Activated CD8-positive, alpha-beta T cell treated with anti-CD3 and anti-CD28 coated beads for 36 hours (primary cell): ENCODE measurements at regions of chr18 and their contacts with region 1.

Region 1: DNA sequence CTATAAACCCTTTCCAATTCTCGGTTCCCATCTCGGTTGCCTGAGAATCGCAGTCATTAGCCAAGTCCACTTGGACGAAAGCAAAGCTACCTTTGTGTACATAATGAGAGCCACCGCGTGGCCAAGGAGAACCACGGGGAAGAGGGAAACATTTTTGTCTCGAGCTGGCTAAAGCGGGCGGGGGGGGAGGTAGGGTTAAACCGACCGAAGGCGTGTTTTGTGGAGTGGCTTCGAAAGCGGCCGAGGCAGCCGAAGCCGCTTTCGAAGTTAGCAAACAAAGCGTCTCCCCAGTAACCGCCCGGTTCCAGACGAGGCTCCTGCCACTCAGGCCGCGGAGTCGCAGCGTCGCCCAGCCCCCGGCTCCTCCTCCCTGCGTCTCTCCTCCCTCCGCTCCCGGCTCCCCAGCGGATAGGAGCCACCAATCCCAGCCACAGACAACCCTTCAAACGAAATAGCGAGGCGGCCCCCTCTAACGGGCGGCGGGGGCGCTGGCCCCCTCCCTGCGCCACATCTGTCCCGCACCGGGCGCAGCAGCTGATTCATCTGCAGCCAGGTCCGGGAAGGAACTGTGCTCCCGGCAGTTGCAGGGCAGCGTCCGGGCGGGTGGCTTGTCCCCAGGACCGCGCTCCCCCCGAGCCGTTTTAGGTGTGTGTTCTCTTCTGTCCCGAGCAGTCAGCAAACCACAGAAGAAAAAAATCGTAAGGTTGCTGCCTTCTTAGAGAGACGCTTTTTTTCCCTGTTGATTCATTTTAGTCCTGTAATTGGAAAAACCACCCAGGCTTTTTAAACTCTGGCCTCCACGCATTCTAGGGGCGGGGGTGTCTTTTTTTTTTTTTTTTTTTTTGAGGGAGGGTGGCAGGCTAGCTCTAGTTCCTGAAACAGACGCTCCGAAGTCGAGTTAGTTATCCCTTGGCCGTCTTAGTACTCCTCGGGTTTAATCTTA is 1.8 kb upstream of the TGIF1 start:
- DNase-seq: peak; percentile 92
- ATAC-seq: peak; percentile 69
- H3K4me3 Mint-ChIP-seq: peak overlapping the region; percentile 94
- H3K27ac Mint-ChIP-seq: peak overlapping the region; percentile 92
- H3K4me1 Mint-ChIP-seq: peaks cover 19% of the 10 kb centered on the region
- H3K27me3 Mint-ChIP-seq: no peaks in the 10 kb centered on the region
- CTCF ChIP-seq: no peak

Region 2: DNA sequence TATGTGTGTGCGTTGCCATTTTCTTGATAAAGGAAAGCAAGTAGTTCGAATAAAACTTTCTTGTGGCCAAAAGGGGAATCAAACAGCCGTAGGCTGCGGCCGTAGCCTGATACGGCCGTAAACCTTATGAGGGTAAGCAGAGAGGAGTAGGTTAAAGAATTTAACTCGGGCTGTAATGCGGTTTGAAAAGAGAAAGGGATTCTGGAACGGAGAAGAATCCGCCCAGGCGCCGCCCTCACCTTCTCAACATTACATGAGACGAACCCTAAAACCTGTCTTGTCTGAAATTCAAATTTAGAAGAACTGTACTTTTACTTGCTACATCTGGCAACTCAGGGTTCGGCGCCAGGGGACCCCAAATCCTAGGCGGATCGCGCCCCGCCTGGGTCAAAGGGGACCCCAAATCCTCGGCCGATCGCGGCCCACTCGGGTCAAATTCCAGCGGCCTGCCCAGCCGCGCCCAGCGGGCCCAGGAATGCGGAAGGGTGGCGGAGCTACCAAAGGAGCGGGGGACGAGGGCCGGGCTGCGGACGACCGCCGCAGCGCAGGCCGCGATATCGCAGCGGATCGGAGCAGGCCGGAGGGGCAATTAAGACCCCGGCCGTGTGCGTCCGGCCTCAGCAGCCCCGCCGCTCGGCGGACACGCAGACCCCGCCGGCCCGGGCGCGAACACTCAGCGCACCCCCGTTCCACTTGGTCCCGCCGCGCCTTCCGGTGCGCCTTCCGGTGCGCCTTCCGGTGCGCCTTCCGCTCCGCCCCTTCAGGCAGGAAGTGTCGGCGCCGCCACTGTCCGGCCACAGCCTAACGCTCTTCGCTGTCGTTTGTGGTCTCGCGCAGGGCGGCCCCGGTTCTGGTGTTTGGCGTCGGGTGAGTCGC is 186.6 kb before region 1 on chr18 and contains the start of gene MYL12B:
- CTCF ChIA-PET with region 1: no interaction called
- POLR2A ChIA-PET with region 1: interaction called, 4 read pairs
- intact Hi-C with region 1: loop called (anchors 5 kb)
- DNase-seq: peak; percentile 85
- ATAC-seq: peak; percentile 81
- H3K4me3 Mint-ChIP-seq: peak within 1 kb of the TSS; percentile 91
- H3K27ac Mint-ChIP-seq: peak within 1 kb of the TSS; percentile 99
- H3K4me1 Mint-ChIP-seq: peaks cover 59% of the 10 kb centered on the region
- H3K27me3 Mint-ChIP-seq: no peaks in the 10 kb centered on the region
- CTCF ChIP-seq: no peak
- total RNA-seq, gene MYL12B: 243 to 264 TPM

Region 3: GRCh38 chr18:3297025-3297984 is 150.9 kb before region 1 on chr18:
- CTCF ChIA-PET with region 1: interaction called, 42 read pairs
- POLR2A ChIA-PET with region 1: interaction called, 5 read pairs
- intact Hi-C with region 1: no loop called
- DNase-seq: peak; percentile 99
- ATAC-seq: peak; percentile 99
- H3K4me3 Mint-ChIP-seq: peak overlapping the region; percentile 92
- H3K27ac Mint-ChIP-seq: peak overlapping the region; percentile 86
- H3K4me1 Mint-ChIP-seq: peaks cover 5% of the 10 kb centered on the region
- H3K27me3 Mint-ChIP-seq: peaks cover 24% of the 10 kb centered on the region
- CTCF ChIP-seq: peak; percentile 83

Region 4: DNA sequence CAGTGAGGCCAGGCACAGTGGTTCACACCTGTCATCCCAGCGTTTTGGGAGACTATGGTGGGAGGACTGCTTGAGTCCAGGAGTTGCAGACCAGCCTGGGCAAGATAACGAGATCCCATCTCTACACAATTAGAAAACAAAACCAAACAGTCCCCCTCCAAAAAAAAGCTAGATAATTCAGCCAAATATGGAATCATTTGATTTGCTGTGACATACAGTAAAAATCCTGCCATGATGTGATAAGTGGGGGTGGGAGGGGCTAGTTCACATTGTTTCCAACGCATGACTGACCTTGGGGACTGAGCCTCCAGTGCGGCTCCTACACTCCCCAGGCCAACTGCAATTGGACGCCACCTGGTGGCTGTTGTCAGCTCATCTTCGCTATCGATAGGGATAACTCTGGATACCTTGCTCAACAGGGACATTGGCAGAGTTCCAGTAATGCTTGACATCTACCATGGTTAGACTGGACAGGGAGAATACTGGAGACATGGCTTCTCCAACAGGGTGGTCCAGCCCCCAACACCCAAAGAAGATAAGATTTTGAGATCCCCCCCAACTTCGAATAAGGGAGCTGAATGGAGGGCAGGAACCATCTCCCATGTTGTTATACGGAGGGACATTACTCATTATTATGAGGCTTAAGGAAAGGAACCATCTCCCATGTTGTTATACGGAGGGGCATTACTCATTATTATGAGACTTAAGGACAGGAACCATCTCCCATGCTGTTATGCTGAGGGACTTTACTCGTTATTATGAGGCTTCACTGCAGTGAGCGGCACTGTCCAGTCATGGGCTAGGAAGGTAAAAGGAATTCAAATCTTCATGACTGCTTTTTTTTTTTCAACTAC is 137.7 kb after region 1 on chr18:
- CTCF ChIA-PET with region 1: interaction called, 13 read pairs
- POLR2A ChIA-PET with region 1: interaction called, 6 read pairs
- intact Hi-C with region 1: no loop called
- DNase-seq: peak; percentile 85
- ATAC-seq: peak; percentile 85
- H3K4me3 Mint-ChIP-seq: no peak overlapping the region
- H3K27ac Mint-ChIP-seq: no peak overlapping the region
- H3K4me1 Mint-ChIP-seq: peaks cover 25% of the 10 kb centered on the region
- H3K27me3 Mint-ChIP-seq: no peaks in the 10 kb centered on the region
- CTCF ChIP-seq: peak; percentile 82

Region 5: GRCh38 chr18:3604498-3605408 is 156.6 kb after region 1 on chr18:
- CTCF ChIA-PET with region 1: interaction called, 14 read pairs
- POLR2A ChIA-PET with region 1: interaction called, 11 read pairs
- intact Hi-C with region 1: no loop called
- DNase-seq: peak; percentile 61
- ATAC-seq: peak; percentile 70
- H3K4me3 Mint-ChIP-seq: no peak overlapping the region
- H3K27ac Mint-ChIP-seq: no peak overlapping the region
- H3K4me1 Mint-ChIP-seq: peaks cover 10% of the 10 kb centered on the region
- H3K27me3 Mint-ChIP-seq: no peaks in the 10 kb centered on the region
- CTCF ChIP-seq: no peak